Psoas muscle (tissue), 8 donors: ENCODE measurements at regions of chr1 and their contacts with region 1.

Region 1: DNA sequence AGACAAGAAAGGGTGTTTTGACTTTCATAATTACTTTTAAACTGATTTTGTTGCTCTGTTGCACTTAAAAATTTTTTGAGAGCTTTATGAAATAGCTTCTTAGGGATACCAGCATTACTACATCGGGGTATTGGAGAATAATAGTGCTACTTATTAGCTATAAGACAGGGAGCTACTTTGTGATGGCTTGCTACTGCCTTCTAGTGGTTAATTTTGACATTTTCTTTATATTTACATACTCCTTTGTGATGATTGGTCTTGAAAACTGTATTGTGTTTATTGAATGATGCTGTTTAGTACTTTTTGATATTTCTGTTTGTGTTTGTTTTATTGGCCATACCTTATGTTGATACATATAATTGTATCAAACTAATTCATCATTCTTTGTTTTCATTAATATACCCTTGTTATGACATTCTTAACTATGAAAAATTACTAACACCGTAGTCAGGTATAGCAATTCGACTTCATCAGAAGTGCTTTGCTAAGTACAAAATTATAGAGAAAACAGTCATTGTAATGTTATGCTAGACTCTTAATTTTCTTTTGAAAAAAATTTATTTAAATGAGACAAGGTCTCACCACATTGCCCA is 85.5 kb downstream of the CLIC4 start:
- DNase-seq: no peak
- ATAC-seq: peak in 3 of 4 donors; percentile 53 to 61 (median 60)
- H3K4me3 ChIP-seq: no peak overlapping the region
- H3K27ac ChIP-seq: no peak overlapping the region
- H3K4me1 ChIP-seq: no peaks in the 10 kb centered on the region
- H3K27me3 ChIP-seq: no peaks in the 10 kb centered on the region
- CTCF ChIP-seq: peak; percentile 87

Region 2: DNA sequence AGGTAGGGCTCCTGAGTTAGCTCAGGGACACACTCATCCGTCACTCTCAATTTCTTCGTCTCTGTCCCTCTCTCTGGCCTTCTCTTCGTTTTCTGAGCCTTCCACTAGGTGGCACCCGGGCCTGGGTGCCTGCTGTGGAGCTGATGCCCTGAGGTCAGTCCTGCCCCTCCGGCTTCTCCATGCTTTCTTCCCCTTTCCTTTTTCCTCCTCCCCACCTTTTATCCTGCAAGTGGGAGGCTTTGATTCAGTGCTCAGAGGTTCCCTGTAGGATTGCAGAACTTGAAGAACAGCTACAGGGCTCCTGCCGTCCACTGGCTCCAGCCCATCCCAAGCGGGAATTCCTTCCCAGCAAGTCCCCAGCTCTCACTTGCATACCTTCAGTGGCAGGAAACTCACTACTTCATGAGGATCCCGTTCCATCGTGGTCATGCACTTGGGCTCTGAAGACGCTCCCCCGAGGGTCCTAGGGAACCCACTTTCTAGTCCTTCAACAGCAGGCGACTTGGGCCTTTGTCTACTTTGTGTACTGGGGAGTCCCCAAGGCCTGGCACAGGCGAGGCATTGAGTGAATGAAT is 142.1 kb before region 1 on chr1:
- intact Hi-C with region 1: loop called (anchors 2 kb)
- DNase-seq: peak; percentile 72 to 79
- ATAC-seq: peak; percentile 80 to 93 (median 90)
- H3K4me3 ChIP-seq: no peak overlapping the region
- H3K27ac ChIP-seq: no peak overlapping the region
- H3K4me1 ChIP-seq: no peaks in the 10 kb centered on the region
- H3K27me3 ChIP-seq: no peaks in the 10 kb centered on the region
- CTCF ChIP-seq: peak; percentile 89

Region 3: DNA sequence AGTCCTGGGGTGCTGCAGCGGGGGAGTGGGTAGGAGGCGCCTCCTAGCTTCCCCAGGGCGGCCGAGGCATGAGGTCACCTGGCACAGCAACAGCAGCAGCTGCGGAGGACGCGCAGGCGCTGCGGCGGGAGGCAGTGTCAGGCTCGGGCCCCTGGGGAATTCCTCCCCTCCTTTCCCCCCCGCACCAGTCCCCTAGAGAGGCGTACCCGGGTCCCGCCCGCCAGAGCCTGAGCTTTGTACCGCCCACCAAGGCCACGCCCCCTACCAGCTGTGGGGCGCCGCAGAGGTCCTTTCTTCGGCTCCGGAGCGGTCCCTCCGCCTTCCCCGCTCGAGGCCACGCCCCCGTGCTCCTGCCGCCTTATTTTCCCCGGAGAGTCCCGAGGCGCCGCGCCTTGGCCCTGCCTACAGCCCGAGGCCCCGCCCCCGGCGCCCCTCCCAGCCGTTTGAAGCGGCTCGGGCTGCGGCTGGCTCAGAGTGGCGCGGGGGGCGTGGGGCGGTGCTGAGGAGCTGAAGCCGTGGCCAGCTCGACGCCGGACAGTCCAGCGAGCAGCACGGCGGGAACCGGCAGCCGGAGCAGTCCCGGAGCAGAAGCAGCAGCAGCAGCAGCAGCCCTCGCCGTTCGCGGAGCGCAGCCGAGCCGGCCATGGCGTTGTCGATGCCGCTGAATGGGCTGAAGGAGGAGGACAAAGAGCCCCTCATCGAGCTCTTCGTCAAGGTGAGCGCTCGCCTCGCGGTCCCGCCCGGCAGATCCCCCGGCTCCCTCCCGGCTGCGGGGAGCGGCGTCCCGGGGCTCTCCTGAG is 85.7 kb before region 1 on chr1 and contains the start of gene CLIC4:
- intact Hi-C with region 1: loop called (anchors 5 to 10 kb)
- DNase-seq: peak; percentile 100
- ATAC-seq: peak; percentile 98 to 99 (median 99)
- H3K4me3 ChIP-seq: peak within 1 kb of the TSS; percentile 82
- H3K27ac ChIP-seq: peak within 1 kb of the TSS; percentile 79
- H3K4me1 ChIP-seq: no peaks in the 10 kb centered on the region
- H3K27me3 ChIP-seq: no peaks in the 10 kb centered on the region
- CTCF ChIP-seq: peak; percentile 21
- total RNA-seq, gene CLIC4: 23.9 to 62.4 (median 45.4) TPM